ENCODE measurements at regions of chr22 and their contacts with region 1.

Region 1: GRCh38 chr22:39309881-39310714 is 9.3 kb downstream of the RPL3 start:
- DNase-seq: no peak
- H3K4me3 ChIP-seq: no peak overlapping the region
- H3K27ac ChIP-seq: no peak overlapping the region
- H3K4me1 ChIP-seq: peaks cover 23% of the 10 kb centered on the region
- H3K27me3 ChIP-seq: no peaks in the 10 kb centered on the region
- CTCF ChIP-seq: no peak
- POLR2A ChIP-seq: no peak

Region 2: GRCh38 chr22:39170825-39171622 is 139.1 kb before region 1 on chr22:
- intact Hi-C with region 1: loop called (anchors 5 kb)
- DNase-seq: peak; percentile 87
- H3K4me3 ChIP-seq: no peak overlapping the region
- H3K27ac ChIP-seq: no peak overlapping the region
- H3K4me1 ChIP-seq: peaks cover 28% of the 10 kb centered on the region
- H3K27me3 ChIP-seq: no peaks in the 10 kb centered on the region
- CTCF ChIP-seq: peak; percentile 98
- POLR2A ChIP-seq: no peak